Naive thymus-derived CD4-positive, alpha-beta T cell (primary cell): ENCODE measurements at regions of chr5 and their contacts with region 1.

Region 1: GRCh38 chr5:68215208-68215897 is at the start of gene PIK3R1:
- DNase-seq: peak; percentile 86 to 96 (median 93)
- ATAC-seq: peak; percentile 91
- H3K4me3 ChIP-seq: peak within 1 kb of the TSS; percentile 73
- H3K4me3 Mint-ChIP-seq: peak within 1 kb of the TSS; percentile 84 to 94 (median 92)
- H3K27ac ChIP-seq: peak within 1 kb of the TSS; percentile 89
- H3K27ac Mint-ChIP-seq: peak within 1 kb of the TSS; percentile 85 to 97 (median 94)
- H3K4me1 ChIP-seq: peaks cover 16 to 18% of the 10 kb centered on the region in 2 donors
- H3K4me1 Mint-ChIP-seq: peaks cover 35 to 46% (median 44%) of the 10 kb centered on the region in 7 donors
- H3K27me3 ChIP-seq: no peaks in the 10 kb centered on the region
- H3K27me3 Mint-ChIP-seq: no peaks in the 10 kb centered on the region
- total RNA-seq, gene PIK3R1: 72.0 to 207 (median 131) TPM

Region 2: DNA sequence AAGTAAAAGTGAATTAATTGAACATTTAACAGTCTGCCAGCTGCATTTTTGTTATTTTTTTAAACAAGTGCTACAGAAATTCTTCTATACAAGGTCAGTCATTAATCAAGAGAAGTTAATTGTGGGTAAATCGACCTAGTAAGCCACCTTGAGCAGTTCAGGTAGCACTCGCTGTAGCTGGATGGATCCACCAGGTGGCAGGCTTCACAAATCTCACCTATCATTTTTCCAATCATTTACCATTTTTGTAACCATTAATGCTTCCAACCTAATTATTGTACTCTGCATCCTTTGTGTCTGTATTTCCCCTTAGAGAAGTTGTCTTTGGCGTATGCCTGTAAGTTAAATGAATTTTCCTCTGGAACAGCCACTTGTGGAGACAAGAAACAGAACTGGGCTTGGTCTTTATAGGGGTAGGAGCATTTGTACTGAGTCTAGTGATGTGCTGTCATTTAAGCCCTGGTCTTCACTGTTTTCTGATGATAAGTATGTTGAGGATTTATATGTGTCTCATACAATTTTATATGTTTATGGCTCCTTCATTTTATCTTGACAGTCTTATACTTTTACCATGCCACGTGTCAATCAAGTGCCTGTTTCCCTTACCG is 1058.3 kb before region 1 on chr5:
- CTCF ChIA-PET with region 1: no interaction called
- POLR2A ChIA-PET with region 1: no interaction called
- intact Hi-C with region 1: loop called (anchors 2 to 10 kb)
- DNase-seq: peak in 7 of 9 donors; percentile 28 to 64 (median 52)
- ATAC-seq: peak; percentile 75
- H3K4me3 ChIP-seq: no peak overlapping the region
- H3K4me3 Mint-ChIP-seq: peak overlapping the region in 4 of 10 donors; percentile 2 to 53 (median 48)
- H3K27ac ChIP-seq: no peak overlapping the region
- H3K27ac Mint-ChIP-seq: peak overlapping the region in 8 of 9 donors; percentile 49 to 100 (median 74)
- H3K4me1 ChIP-seq: peaks cover 41 to 42% of the 10 kb centered on the region in 2 donors
- H3K4me1 Mint-ChIP-seq: peaks cover 25 to 61% (median 55%) of the 10 kb centered on the region in 7 donors
- H3K27me3 ChIP-seq: no peaks in the 10 kb centered on the region
- H3K27me3 Mint-ChIP-seq: no peaks in the 10 kb centered on the region

Region 3: DNA sequence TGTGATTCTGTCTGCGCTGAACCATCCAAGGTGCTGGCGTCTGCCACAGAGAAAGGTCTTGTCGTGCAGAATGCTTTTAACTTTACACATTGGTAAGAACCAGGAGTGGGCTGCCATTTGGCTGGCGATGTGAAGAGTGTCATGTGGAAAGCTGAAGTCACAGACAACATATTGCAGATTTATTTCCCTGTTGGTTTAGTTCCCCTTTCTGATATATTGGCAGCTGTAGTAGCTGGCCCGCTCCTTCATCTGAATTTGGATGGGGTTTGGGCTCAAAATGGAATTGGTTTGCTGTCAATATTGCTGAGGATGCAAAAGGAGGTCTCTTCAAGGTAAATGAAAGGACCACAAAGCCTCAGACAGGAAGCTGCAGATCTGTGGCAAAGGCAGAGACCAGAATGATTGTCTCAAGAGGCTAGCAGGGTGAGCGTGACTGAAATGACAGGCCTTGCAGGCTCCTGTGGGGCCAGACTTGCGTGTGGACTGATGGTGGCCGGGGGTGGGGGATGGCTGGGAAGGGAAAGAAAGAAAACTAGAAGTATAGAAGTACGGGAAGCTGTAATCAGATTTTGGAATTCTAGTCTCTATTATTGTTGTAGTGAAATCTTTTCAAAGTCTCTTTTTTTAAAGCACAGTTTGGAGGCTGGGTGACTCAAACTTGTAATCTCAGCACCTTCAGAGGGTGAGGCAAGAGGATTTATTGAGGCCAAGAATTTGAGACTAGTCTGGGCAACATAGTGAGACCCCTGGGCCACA is 993.7 kb before region 1 on chr5:
- CTCF ChIA-PET with region 1: no interaction called
- POLR2A ChIA-PET with region 1: interaction called, 12 read pairs
- intact Hi-C with region 1: no loop called
- DNase-seq: peak in 6 of 9 donors; percentile 33 to 48 (median 40)
- ATAC-seq: peak; percentile 85
- H3K4me3 ChIP-seq: peak overlapping the region; percentile 33
- H3K4me3 Mint-ChIP-seq: peak overlapping the region; percentile 63 to 80 (median 71)
- H3K27ac ChIP-seq: peak overlapping the region; percentile 24
- H3K27ac Mint-ChIP-seq: peak overlapping the region; percentile 61 to 99 (median 91)
- H3K4me1 ChIP-seq: peaks cover 44 to 47% of the 10 kb centered on the region in 2 donors
- H3K4me1 Mint-ChIP-seq: peaks cover 42 to 74% (median 66%) of the 10 kb centered on the region in 7 donors
- H3K27me3 ChIP-seq: no peaks in the 10 kb centered on the region
- H3K27me3 Mint-ChIP-seq: peaks cover 0 to 4% (median 0%) of the 10 kb centered on the region in 5 donors

Region 4: GRCh38 chr5:67908126-67908765 is 307.1 kb before region 1 on chr5:
- CTCF ChIA-PET with region 1: no interaction called
- POLR2A ChIA-PET with region 1: no interaction called
- intact Hi-C with region 1: no loop called
- DNase-seq: no peak
- ATAC-seq: no peak
- H3K4me3 ChIP-seq: no peak overlapping the region
- H3K4me3 Mint-ChIP-seq: no peak overlapping the region
- H3K27ac ChIP-seq: no peak overlapping the region
- H3K27ac Mint-ChIP-seq: no peak overlapping the region
- H3K4me1 ChIP-seq: no peaks in the 10 kb centered on the region
- H3K4me1 Mint-ChIP-seq: peaks cover 0 to 1% (median 0%) of the 10 kb centered on the region in 7 donors
- H3K27me3 ChIP-seq: no peaks in the 10 kb centered on the region
- H3K27me3 Mint-ChIP-seq: peaks cover 0 to 6% (median 4%) of the 10 kb centered on the region in 5 donors

Region 5: GRCh38 chr5:68200288-68200687 is 15.1 kb before region 1 on chr5:
- CTCF ChIA-PET with region 1: no interaction called
- POLR2A ChIA-PET with region 1: no interaction called
- intact Hi-C with region 1: no loop called
- DNase-seq: no peak
- ATAC-seq: no peak
- H3K4me3 ChIP-seq: no peak overlapping the region
- H3K4me3 Mint-ChIP-seq: no peak overlapping the region
- H3K27ac ChIP-seq: no peak overlapping the region
- H3K27ac Mint-ChIP-seq: no peak overlapping the region
- H3K4me1 ChIP-seq: no peaks in the 10 kb centered on the region
- H3K4me1 Mint-ChIP-seq: no peaks in the 10 kb centered on the region
- H3K27me3 ChIP-seq: no peaks in the 10 kb centered on the region
- H3K27me3 Mint-ChIP-seq: peaks cover 0 to 17% (median 11%) of the 10 kb centered on the region in 5 donors

Region 6: DNA sequence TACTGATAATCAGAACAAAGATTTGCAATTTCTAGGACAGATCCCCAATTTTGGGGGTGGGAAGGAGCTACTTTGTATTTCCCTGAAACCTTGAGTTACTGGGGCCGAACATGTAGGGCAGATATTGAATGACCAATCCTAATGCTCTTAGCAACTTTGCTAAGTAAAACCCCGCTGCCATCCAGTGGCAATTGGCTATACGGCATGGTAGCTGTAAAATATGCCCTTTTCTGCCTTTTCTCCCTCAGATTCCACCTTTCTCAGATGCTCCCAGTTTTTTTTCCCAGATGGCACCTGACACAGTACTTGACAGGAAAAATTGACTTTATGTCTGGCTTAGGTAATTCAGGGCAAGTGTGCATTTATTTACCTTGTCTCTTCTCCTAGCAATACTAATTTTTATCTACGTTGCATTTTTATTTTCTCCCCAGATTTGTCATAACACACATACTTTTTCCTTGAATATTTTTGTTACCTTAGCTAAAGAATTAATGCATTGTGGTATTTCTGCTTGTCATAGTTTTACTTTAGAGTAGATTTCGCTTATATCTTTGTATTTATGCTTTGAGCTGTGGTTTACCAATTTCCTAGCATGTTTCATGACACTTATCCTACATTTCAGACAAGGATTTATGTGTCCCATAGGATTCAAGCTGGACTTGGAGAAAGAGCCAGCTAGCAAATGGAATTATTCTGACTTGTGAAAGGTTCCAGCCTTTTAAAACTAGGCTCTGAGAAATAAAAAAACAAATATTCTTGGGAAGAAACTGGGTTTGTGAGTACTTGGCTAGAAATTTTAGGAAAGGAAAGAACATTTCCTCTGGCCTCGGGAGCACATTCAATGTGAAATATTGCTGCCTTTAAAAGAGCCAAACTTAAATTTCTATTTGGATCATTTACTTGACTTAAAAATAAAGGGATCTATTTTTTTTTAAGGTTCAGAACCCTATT is 37.6 kb after region 1 on chr5:
- CTCF ChIA-PET with region 1: interaction called, 14 read pairs
- POLR2A ChIA-PET with region 1: interaction called, 17 read pairs
- intact Hi-C with region 1: loop called (anchors 1 to 5 kb)
- DNase-seq: peak in 5 of 9 donors; percentile 31 to 43 (median 33)
- ATAC-seq: peak; percentile 53
- H3K4me3 ChIP-seq: no peak overlapping the region
- H3K4me3 Mint-ChIP-seq: peak overlapping the region in 5 of 10 donors; percentile 1 to 79 (median 57)
- H3K27ac ChIP-seq: peak overlapping the region; percentile 60
- H3K27ac Mint-ChIP-seq: peak overlapping the region in 8 of 9 donors; percentile 53 to 95 (median 92)
- H3K4me1 ChIP-seq: peaks cover 67 to 77% of the 10 kb centered on the region in 2 donors
- H3K4me1 Mint-ChIP-seq: peaks cover 71 to 98% (median 94%) of the 10 kb centered on the region in 7 donors
- H3K27me3 ChIP-seq: no peaks in the 10 kb centered on the region
- H3K27me3 Mint-ChIP-seq: no peaks in the 10 kb centered on the region

Region 7: DNA sequence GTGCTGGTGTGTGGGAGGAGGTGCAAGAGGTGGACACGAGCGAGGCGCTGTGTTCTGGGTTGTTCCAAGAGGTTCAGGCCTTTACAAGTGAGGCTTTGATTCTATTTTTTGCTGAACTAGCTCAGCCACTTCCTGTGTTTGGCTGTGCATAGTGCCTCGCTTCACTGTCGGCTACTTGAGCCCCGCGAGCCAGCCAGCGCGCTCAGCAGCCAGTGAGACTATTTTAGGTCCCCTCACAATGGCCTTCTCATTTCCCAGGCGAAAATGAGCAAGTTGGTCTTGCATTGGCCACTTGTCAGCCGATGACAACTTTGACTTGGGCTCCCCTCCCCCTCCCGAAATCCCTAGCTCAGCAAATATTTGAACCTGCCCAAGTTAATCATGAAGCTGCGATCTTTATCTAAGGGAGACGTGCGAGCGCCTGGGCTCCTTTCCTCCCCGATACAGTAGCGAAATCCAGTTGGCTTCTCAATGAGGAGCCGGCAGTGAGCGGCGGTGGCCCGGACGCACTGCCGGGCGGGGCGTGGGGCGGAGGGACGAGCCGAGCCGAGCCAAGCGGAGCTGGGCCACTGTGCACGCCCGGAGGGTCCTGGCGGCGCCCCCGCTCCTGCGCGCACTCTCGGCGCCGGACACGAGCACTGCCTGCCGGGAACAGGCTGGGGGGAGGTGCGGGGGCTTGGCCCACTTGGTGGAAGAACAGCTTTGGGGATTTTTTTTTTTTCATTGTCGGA is 72.8 kb after region 1 on chr5:
- CTCF ChIA-PET with region 1: interaction called, 3 read pairs
- POLR2A ChIA-PET with region 1: interaction called, 10 read pairs
- intact Hi-C with region 1: no loop called
- DNase-seq: peak; percentile 19 to 55 (median 49)
- ATAC-seq: peak; percentile 76
- H3K4me3 ChIP-seq: peak overlapping the region; percentile 65
- H3K4me3 Mint-ChIP-seq: peak overlapping the region; percentile 81 to 93 (median 90)
- H3K27ac ChIP-seq: peak overlapping the region; percentile 55
- H3K27ac Mint-ChIP-seq: peak overlapping the region; percentile 75 to 97 (median 92)
- H3K4me1 ChIP-seq: peaks cover 64 to 79% of the 10 kb centered on the region in 2 donors
- H3K4me1 Mint-ChIP-seq: peaks cover 49 to 96% (median 90%) of the 10 kb centered on the region in 7 donors
- H3K27me3 ChIP-seq: no peaks in the 10 kb centered on the region
- H3K27me3 Mint-ChIP-seq: no peaks in the 10 kb centered on the region

Region 8: DNA sequence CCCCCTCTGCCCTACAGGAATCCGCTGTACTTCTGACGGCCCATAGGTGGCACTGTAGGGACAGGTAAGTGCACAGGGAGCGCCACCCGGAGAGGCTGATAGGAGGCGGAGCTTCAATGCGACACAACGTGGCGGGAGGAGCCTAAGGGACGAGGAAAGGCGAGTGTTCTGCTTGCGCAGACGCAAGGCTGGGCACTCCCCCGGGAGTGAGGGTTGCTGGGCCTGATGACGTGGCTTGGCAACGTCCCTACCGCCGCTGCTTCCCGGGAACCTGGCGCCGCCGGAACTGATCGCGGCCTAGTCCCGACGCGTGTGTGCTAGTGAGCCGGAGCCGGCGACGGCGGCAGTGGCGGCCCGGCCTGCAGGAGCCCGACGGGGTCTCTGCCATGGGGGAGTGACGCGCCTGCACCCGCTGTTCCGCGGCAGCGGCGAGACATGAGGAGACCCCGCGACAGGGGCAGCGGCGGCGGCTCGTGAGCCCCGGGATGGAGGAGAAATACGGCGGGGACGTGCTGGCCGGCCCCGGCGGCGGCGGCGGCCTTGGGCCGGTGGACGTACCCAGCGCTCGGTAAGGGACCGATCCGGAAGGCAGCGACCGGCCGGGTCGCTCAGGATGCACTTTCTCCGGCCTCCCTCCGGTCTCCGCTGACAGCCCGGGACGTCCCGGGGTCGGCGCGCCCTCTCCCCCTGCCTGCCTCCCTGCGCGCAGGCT is 878.6 kb after region 1 on chr5 and contains the start of gene SLC30A5:
- CTCF ChIA-PET with region 1: no interaction called
- POLR2A ChIA-PET with region 1: no interaction called
- intact Hi-C with region 1: loop called (anchors 1 to 5 kb)
- DNase-seq: peak; percentile 83 to 99 (median 98)
- ATAC-seq: peak; percentile 99
- H3K4me3 ChIP-seq: peak within 1 kb of the TSS; percentile 70
- H3K4me3 Mint-ChIP-seq: peak within 1 kb of the TSS; percentile 89 to 94 (median 93)
- H3K27ac ChIP-seq: peak within 1 kb of the TSS; percentile 98
- H3K27ac Mint-ChIP-seq: peak within 1 kb of the TSS; percentile 84 to 98 (median 95)
- H3K4me1 ChIP-seq: peaks cover 9 to 17% of the 10 kb centered on the region in 2 donors
- H3K4me1 Mint-ChIP-seq: peaks cover 17 to 49% (median 37%) of the 10 kb centered on the region in 7 donors
- H3K27me3 ChIP-seq: no peaks in the 10 kb centered on the region
- H3K27me3 Mint-ChIP-seq: no peaks in the 10 kb centered on the region
- total RNA-seq, gene SLC30A5: 15.9 to 46.5 (median 41.3) TPM